ENCODE measurements at regions of chr11 and their contacts with region 1.

Region 1: GRCh38 chr11:62542750-62543567 is 3.6 kb downstream of the AHNAK start:
- DNase-seq: peak; percentile 78
- CTCF ChIP-seq: peak; percentile 97

Region 2: GRCh38 chr11:62256281-62256680 is 286.7 kb before region 1 on chr11:
- CTCF ChIA-PET with region 1: no interaction called
- POLR2A ChIA-PET with region 1: no interaction called
- DNase-seq: no peak
- CTCF ChIP-seq: no peak

Region 3: DNA sequence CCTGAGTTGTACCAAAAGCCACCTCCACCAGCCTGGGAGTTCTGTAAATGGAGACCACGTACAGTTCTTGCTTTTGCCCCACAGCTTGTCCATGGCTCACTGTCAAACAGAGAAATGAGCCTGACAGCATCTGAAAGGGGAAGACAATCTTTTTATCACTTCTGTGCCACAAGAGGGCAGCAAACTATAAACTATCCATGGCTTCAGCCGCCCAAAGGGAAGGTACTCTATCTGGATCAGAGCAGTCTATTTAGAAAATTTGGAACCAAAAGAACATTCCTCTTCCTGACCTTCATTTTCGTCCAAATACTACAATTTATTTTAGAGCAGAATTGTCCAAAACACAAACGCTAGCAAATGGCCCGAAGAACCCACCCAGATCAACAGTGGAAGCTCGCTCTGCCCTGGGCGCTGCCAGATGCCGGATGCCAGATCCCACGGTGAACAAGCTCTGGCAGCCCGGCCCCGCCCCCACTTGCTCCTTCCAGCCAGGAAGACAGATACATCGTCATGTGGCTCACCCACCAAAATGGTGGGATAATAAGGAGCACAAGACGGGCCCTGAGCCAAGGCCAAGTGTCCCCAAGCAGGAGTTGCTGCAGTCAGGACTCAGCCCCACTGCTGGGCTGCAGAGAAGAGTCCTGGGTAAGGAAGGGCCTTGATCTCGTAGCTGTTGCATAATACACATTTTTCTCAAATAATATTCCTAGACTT is 148.0 kb before region 1 on chr11:
- CTCF ChIA-PET with region 1: interaction called, 25 read pairs
- POLR2A ChIA-PET with region 1: no interaction called
- DNase-seq: peak; percentile 81
- CTCF ChIP-seq: peak; percentile 64

Region 4: GRCh38 chr11:62421996-62422395 is 121.0 kb before region 1 on chr11:
- CTCF ChIA-PET with region 1: interaction called, 83 read pairs
- POLR2A ChIA-PET with region 1: interaction called, 5 read pairs
- DNase-seq: no peak
- CTCF ChIP-seq: no peak

Region 5: DNA sequence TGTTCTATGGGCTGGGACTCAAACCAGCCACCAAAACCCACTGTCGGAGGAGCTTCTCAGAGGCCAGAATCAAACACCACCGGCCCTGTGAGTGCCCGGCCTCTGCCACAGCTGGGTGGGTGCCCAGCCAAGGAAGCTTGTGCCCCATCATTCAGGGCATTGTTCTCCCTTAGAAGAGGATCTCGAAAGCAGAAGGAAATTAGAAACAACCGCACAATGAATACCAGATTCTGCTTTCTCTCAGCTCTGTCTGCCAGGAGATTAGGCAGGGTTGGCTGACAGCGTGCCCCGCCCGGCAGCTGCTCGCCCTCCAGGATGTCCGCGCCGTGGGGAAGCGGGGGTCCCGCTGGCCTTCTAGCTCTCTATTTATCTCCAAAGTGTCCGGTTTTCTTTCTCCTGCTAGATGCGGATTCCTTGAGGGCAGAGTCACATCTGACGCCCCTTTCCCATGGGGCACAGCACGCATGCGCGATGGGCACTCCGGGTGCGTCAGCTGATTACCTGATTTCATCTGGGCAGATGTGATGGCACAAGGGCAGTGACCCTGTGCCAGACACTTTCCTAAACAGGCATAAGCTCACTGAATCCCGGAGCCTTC is 98.6 kb before region 1 on chr11:
- CTCF ChIA-PET with region 1: interaction called, 12 read pairs
- POLR2A ChIA-PET with region 1: interaction called, 3 read pairs
- DNase-seq: peak; percentile 57
- CTCF ChIP-seq: no peak

Region 6: DNA sequence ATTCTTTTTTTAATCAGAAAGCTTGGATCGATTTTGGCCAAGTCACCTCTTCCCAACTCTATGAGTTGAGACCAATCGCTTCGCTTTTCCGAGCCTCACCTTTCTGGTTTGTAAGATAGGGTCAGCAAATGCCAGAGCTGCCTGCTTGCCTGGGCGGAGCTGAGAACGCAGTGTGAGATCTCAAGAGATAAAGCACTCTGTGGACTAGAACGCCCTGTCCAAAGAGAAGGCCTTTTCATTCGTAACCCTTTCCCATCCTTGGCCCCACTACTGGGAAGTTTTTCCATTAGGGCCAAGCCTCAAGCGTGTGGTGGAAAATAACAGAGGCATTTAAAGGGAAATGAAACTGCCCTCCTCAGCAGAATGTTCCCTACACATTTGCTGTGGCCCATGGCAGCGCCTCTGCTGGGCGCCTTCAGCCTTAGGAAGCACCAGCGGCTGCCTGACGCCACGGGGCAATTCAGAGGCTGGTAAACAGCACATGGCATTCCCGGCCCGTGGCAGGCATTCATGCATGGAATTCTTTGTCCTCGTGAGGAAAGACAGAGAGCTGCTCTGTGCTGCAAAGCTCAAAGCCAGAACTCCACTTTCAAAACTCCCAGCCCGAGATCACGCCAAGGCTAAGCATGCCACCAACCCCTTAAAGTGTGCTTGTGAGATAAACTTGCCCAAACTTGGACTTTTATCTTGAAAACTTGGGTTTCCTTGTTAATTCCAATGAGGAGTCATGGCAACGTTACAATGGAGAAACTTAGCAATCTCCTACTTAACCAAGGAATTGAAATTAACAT is 34.5 kb before region 1 on chr11:
- CTCF ChIA-PET with region 1: interaction called, 12 read pairs
- POLR2A ChIA-PET with region 1: interaction called, 5 read pairs
- DNase-seq: peak; percentile 57
- CTCF ChIP-seq: peak; percentile 25

Region 7: GRCh38 chr11:62532096-62532495 is 10.9 kb before region 1 on chr11:
- CTCF ChIA-PET with region 1: interaction called, 10 read pairs
- POLR2A ChIA-PET with region 1: no interaction called
- DNase-seq: no peak
- CTCF ChIP-seq: no peak

Region 8: GRCh38 chr11:62566247-62566646 is 23.3 kb after region 1 on chr11:
- CTCF ChIA-PET with region 1: interaction called, 247 read pairs
- POLR2A ChIA-PET with region 1: no interaction called
- DNase-seq: no peak
- CTCF ChIP-seq: no peak

Measured in GM10248 (cell line).